ENCODE measurements at regions of chr5 and their contacts with region 1.

Region 1: GRCh38 chr5:79857714-79858409 is 133.2 kb downstream of the MTX3 start:
- DNase-seq: peak; percentile 60 to 96 (median 84)

Region 2: GRCh38 chr5:79133657-79134451 is 724.0 kb before region 1 on chr5:
- intact Hi-C with region 1: loop called (anchors 5 kb)
- DNase-seq: peak in 9 of 10 donors; percentile 38 to 90 (median 61)

Region 3: DNA sequence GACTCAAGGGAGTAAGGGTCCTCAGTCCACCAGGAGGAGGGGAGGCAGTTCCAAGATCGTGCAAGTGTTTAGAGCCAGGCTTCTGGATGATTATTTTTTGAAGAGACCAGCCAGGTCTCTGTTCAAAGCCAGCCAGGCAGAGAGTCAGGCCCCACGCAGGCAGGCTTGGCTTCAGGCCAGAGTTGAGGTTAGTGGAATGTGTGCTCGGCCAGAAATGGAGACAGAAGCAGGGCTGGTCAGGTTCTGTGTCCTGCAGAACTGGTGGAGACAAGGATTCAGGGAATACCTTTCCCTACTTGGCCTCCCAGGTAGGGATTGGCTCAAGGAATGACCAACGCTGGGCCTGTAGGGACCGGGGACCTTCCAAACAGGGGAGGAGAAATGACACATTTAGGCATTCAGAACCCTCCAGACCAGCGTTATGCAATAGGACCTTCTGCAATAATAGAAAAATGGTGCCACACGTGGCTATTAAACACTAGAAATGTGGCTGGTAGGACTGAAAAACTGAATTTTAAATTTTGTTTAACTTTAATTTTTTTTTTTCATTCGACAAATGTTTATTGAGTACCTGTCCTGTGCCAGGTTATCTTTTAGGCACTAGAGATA is 62.0 kb before region 1 on chr5:
- intact Hi-C with region 1: no loop called
- DNase-seq: peak in 1 of 10 donors; percentile 39